CD14-positive monocyte (primary cell): ENCODE measurements at regions of chr2 and their contacts with region 1.

Region 1: DNA sequence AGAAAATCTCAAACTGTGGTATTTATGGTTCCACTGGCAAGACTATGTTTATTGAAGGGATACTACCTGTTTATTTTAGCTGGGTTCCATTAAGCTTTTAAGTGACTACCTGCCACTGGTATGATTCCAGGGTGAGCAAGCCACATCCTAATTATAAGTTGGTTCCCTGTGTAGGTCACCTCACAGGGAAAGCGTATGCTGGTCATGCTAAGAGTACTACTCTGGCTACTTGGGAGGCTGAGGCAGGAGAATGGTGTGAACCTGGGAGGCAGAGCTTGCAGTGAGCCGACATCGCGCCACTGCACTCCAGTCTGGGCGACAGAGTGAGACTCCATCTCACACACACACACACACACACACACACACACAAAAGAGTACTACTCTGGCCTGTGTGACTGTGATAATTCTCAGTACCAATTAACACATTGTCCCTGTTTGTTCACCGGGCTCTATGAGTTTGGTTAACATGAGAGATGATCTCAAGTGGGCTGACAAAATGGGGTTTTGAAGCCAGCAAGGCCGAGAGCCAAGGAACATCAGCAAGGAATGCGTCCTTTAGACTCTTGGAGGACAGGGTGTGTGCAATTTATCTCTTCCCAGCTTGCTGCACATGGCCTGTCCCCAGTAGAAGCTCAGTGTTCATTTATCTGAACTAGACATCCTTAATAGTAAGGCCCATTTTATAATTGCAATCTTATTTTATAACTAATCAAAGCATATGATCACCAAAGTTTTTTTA is 15.2 kb upstream of the ITSN2 start:
- DNase-seq: no peak
- H3K4me3 ChIP-seq: no peak overlapping the region
- H3K4me3 Mint-ChIP-seq: no peak overlapping the region
- H3K27ac ChIP-seq: no peak overlapping the region
- H3K27ac Mint-ChIP-seq: no peak overlapping the region
- H3K4me1 ChIP-seq: no peaks in the 10 kb centered on the region
- H3K4me1 Mint-ChIP-seq: no peaks in the 10 kb centered on the region
- H3K27me3 ChIP-seq: no peaks in the 10 kb centered on the region
- H3K27me3 Mint-ChIP-seq: no peaks in the 10 kb centered on the region
- CTCF ChIP-seq: no peak

Region 2: GRCh38 chr2:24329700-24330099 is 45.8 kb before region 1 on chr2:
- intact Hi-C with region 1: loop called in 1 of 2 experiments (anchors 10 kb)
- DNase-seq: peak; percentile 57 to 59 (median 58)
- H3K4me3 ChIP-seq: peak overlapping the region in 1 of 3 experiments; percentile 59
- H3K4me3 Mint-ChIP-seq: peak overlapping the region in 1 of 2 donors; percentile 26
- H3K27ac ChIP-seq: peak overlapping the region; percentile 62 to 82
- H3K27ac Mint-ChIP-seq: peak overlapping the region; percentile 52 to 93 (median 84)
- H3K4me1 ChIP-seq: peaks cover 40 to 45% of the 10 kb centered on the region in 2 donors
- H3K4me1 Mint-ChIP-seq: peaks cover 57% of the 10 kb centered on the region
- H3K27me3 ChIP-seq: no peaks in the 10 kb centered on the region
- H3K27me3 Mint-ChIP-seq: no peaks in the 10 kb centered on the region
- CTCF ChIP-seq: no peak